ENCODE measurements at regions of chr3 and their contacts with region 1.

Region 1: GRCh38 chr3:141460097-141460704 is 26.6 kb upstream of the RASA2 start:
- DNase-seq: peak; percentile 93
- H3K4me3 ChIP-seq: no peak overlapping the region
- H3K27ac ChIP-seq: no peak overlapping the region
- H3K4me1 ChIP-seq: peaks cover 5% of the 10 kb centered on the region
- H3K27me3 ChIP-seq: no peaks in the 10 kb centered on the region
- CTCF ChIP-seq: peak; percentile 93

Region 2: DNA sequence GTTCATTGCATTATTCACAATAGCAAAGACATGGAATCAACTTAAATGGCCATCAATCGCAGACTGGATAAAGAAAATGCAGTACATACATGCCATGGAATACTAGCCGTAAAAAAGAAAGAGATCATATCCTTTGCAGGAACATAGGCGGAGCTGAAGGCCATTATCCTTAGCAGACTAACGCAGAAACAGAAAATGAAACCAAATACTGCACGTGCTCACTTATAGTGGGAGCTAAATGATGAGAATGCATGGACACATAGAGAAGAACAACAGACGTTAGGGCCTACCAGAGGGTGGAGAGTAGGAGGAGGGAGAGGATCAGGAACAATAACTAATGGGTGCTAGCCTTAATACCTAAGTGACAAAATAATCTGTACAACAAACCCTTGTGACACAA is 84.5 kb after region 1 on chr3:
- intact Hi-C with region 1: no loop called
- DNase-seq: peak; percentile 34
- H3K4me3 ChIP-seq: no peak overlapping the region
- H3K27ac ChIP-seq: peak overlapping the region; percentile 15
- H3K4me1 ChIP-seq: no peaks in the 10 kb centered on the region
- H3K27me3 ChIP-seq: no peaks in the 10 kb centered on the region
- CTCF ChIP-seq: no peak

Region 3: GRCh38 chr3:141644931-141645330 is 184.7 kb after region 1 on chr3:
- intact Hi-C with region 1: loop called (anchors 10 kb)
- DNase-seq: peak; percentile 88
- H3K4me3 ChIP-seq: no peak overlapping the region
- H3K27ac ChIP-seq: no peak overlapping the region
- H3K4me1 ChIP-seq: no peaks in the 10 kb centered on the region
- H3K27me3 ChIP-seq: no peaks in the 10 kb centered on the region
- CTCF ChIP-seq: peak; percentile 81